IMR-90 (cell line): ENCODE measurements at regions of chr12 and their contacts with region 1.

Region 1: DNA sequence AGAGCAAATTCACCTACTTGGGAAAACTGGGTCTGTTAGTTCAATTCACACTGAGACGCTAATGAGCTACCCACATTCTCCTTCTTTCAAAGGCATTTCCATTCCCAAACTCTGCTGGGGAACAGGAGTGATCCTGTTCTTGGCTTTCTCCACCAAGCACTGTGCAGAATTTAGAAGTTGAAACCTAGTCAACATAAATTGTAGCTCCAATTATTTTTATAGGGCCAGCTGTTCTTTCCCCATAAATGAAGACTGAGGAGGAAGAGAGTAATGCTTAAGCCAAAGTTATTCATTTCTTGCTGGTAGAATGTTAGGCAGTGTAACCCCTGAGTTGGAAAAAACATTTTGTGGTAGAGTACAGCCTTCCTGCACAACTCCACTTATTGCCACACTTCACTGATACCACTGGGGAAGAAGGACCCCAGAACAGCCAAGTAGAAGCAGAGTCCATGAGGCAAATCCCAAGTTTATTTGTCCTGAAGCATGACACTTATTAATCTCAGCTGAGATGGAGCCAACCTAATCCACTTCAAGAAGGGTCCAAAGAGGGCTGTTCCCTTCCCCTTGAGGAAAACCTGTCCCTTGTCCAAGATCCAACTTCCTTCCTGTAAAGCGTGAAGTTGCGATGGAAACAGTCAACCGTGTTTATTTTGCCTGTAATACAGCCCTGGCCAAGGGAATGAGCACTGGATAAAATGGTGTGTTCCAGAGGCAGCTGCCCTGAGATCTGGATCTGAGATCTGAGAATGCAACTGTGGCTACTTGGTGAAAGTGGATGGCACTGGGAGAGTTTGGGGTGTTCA is 151.8 kb downstream of the TBX5 start:
- DNase-seq: no peak
- ATAC-seq: no peak
- H3K4me3 ChIP-seq: no peak overlapping the region
- H3K27ac ChIP-seq: no peak overlapping the region
- H3K4me1 ChIP-seq: no peaks in the 10 kb centered on the region
- H3K27me3 ChIP-seq: no peaks in the 10 kb centered on the region; the same call in 1 of the 2 replicates
- CTCF ChIP-seq: no peak
- POLR2A ChIP-seq: no peak
- RAD21 ChIP-seq: no peak

Region 2: DNA sequence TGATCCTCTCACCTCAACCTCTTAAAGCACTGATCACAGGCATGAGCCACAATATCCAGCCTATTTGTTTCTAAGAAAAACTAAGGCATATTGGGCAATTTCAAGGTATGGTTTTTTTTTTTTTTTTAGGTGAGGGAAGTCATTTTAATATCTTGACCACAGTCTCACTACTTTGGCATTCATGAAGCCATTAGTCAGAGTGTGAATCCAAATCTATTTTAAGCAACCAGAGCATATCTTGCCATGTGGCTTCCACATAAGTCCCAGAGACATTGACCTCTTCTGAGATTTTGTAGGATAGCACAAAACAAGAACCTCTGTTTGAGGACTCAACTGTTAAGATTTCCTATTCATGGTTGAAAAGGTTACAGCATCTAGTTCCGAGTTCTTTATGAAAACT is 157.7 kb before region 1 on chr12:
- CTCF ChIA-PET with region 1: no interaction called
- POLR2A ChIA-PET with region 1: no interaction called
- dilution Hi-C with region 1: no loop called
- in situ Hi-C with region 1: no loop called
- intact Hi-C with region 1: no loop called
- DNase-seq: peak; percentile 31
- ATAC-seq: no peak
- H3K4me3 ChIP-seq: no peak overlapping the region
- H3K27ac ChIP-seq: no peak overlapping the region
- H3K4me1 ChIP-seq: no peaks in the 10 kb centered on the region
- H3K27me3 ChIP-seq: no peaks in the 10 kb centered on the region
- CTCF ChIP-seq: no peak
- POLR2A ChIP-seq: no peak
- RAD21 ChIP-seq: no peak

Region 3: DNA sequence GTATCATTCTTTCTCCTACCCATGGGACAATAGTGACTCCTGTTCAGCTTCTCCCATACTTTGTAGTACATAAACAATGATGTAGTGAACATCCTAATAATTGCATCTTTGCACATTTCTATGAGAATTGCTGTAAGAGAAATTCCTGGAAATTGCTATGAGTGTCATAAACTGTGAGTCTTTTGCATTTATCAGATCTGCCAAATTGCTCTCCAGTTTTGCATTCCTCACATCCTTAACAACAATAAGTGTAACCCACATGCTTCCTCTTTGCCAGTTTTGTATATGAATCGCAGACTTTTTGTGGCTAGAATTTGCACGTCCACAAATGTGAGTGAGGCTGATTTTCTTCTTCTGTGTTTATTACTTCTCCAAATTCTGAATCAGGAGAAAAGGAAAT is 275.8 kb after region 1 on chr12:
- CTCF ChIA-PET with region 1: interaction called, 11 read pairs
- POLR2A ChIA-PET with region 1: no interaction called
- dilution Hi-C with region 1: no loop called
- in situ Hi-C with region 1: no loop called
- intact Hi-C with region 1: no loop called
- DNase-seq: no peak
- ATAC-seq: no peak
- H3K4me3 ChIP-seq: no peak overlapping the region
- H3K27ac ChIP-seq: no peak overlapping the region
- H3K4me1 ChIP-seq: no peaks in the 10 kb centered on the region
- H3K27me3 ChIP-seq: peaks cover 1% of the 10 kb centered on the region; the same call in 1 of the 2 replicates
- CTCF ChIP-seq: no peak
- POLR2A ChIP-seq: no peak
- RAD21 ChIP-seq: no peak